Breast epithelium (tissue), 4 donors: ENCODE measurements at regions of chr9 and their contacts with region 1.

Region 1: GRCh38 chr9:115369322-115369957 is 251.5 kb upstream of the TNC start:
- DNase-seq: peak in 1 of 2 donors; percentile 24
- H3K4me3 ChIP-seq: no peak overlapping the region
- H3K27ac ChIP-seq: no peak overlapping the region
- H3K4me1 ChIP-seq: no peaks in the 10 kb centered on the region
- H3K27me3 ChIP-seq: no peaks in the 10 kb centered on the region
- CTCF ChIP-seq: no peak
- POLR2A ChIP-seq: no peak

Region 2: DNA sequence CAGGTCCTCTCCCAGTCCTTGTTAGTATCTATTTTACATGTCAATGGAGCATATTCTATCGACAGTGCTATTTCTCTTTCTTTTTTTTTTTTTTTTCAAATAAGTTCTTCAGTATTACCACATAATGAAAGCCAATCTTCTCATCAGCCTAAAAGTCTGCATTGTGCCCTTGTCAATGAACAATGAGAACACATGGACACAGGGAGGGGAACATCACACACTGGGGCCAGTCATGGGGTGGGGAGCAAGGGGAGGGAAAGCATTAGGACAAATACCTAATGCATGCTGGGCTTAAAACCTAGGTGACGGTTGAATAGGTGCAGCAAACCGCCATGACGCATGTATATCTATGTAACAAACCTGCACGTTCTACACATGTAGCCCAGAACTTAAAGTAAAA is 639.7 kb before region 1 on chr9:
- intact Hi-C with region 1: loop called (anchors 5 kb)
- DNase-seq: no peak
- H3K4me3 ChIP-seq: no peak overlapping the region
- H3K27ac ChIP-seq: no peak overlapping the region
- H3K4me1 ChIP-seq: no peaks in the 10 kb centered on the region
- H3K27me3 ChIP-seq: no peaks in the 10 kb centered on the region
- CTCF ChIP-seq: no peak
- POLR2A ChIP-seq: no peak